Activated T-helper 2 cell treated with anti-CD3 and anti-CD28 coated beads, Interferon-gamma antibody, Interleukin-2, Interleukin-4, amounts not matched to agents 10 μg/mL and 5 μg/mL and 100 μg/mL, durations not matched to agents 14 hours and 24 hours and 36 hours (primary cell): ENCODE measurements at regions of chr7 and their contacts with region 1.

Region 1: DNA sequence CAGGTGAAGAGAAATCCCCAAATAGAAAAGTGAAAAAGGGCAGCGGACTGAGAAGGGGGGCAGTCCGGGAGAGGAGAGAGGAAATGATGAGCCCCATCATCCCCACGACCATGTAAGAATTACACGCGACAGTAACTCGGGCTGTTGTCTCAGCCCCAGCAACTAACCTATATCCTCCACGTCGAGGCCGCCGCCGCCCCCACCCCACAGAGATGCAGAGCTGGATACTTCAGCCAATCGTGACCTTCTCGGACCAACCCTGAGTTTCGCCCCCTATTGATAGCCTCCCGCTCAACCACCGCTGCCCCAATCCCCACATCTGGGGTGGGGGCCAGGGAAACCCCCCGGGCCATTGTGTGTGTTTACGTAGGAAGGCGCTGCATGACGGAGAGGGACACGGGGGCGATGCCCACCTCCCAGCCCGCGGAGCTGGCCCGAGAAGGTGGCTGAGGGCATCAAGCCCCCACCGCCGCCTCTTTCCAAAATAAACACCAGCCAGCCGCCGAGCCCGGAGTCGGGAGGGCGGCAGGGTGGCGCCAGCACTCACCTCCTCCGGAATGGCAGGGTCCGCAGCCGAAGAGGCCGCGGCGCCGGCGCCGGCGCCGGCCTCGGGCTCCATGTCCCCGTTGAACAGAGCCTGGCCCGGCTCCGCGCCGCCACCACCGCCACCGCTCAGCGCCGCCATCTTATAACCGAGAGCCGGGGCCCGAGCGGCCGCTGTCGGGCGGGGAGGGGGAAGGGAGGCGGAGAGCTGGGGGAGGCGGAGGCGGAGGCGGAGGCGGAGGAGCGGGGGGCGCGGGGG is 509 bp downstream of the BRAF start:
- DNase-seq: peak; percentile 62
- H3K4me3 Mint-ChIP-seq: no peak overlapping the region
- H3K27ac Mint-ChIP-seq: no peak overlapping the region
- H3K4me1 Mint-ChIP-seq: peaks cover 8% of the 10 kb centered on the region
- H3K27me3 Mint-ChIP-seq: peaks cover 2% of the 10 kb centered on the region

Region 2: DNA sequence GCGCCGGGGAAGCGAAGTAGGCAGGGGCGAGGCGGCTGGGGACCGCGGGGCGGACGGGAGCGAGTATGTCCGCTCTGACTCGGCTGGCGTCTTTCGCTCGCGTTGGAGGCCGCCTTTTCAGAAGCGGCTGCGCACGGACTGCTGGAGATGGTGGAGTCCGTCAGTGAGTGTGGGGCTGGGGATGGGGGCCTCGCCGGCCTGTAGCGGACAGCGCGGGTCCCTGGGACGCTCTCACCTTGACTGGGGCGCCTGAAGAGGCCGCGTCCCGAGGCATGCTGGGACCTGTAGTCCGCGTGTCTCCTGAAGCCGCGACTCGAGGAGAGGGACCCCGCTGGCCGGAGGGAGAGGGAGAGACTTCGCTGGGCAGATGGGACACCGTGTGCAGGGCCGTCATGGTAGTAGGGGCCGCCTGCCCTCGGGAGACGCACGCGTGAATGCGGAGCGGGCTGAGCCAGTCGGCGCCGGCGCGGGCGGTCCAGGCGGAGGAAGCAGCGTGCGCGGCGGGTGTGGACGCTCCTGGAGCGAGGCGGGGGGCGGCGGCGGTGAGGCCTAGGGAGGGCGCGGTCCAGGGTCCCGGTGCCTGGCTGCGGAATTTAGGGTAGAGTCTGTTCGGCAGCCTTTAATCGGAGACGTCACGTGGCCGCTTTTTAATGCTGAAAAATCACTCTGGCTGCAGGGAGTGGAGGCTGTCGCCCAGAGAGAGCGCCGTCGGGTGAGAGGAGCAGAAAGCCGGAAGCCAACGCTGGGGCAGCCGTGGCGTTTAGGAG is 227.4 kb before region 1 on chr7 and contains the start of gene NDUFB2:
- intact Hi-C with region 1: loop called (anchors 1 kb)
- DNase-seq: peak; percentile 86
- H3K4me3 Mint-ChIP-seq: peak within 1 kb of the TSS; percentile 99
- H3K27ac Mint-ChIP-seq: peak within 1 kb of the TSS; percentile 99
- H3K4me1 Mint-ChIP-seq: peaks cover 26% of the 10 kb centered on the region
- H3K27me3 Mint-ChIP-seq: no peaks in the 10 kb centered on the region
- total RNA-seq, gene NDUFB2: 172 and 178 TPM in 2 replicates

Region 3: GRCh38 chr7:140810830-140811556 is 113.2 kb before region 1 on chr7:
- intact Hi-C with region 1: loop called (anchors 2 kb)
- DNase-seq: peak; percentile 34
- H3K4me3 Mint-ChIP-seq: no peak overlapping the region
- H3K27ac Mint-ChIP-seq: no peak overlapping the region
- H3K4me1 Mint-ChIP-seq: peaks cover 1% of the 10 kb centered on the region
- H3K27me3 Mint-ChIP-seq: no peaks in the 10 kb centered on the region

Region 4: GRCh38 chr7:140876519-140877248 is 47.5 kb before region 1 on chr7:
- intact Hi-C with region 1: loop called (anchors 2 kb)
- DNase-seq: no peak
- H3K4me3 Mint-ChIP-seq: no peak overlapping the region
- H3K27ac Mint-ChIP-seq: no peak overlapping the region
- H3K4me1 Mint-ChIP-seq: peaks cover 45% of the 10 kb centered on the region
- H3K27me3 Mint-ChIP-seq: no peaks in the 10 kb centered on the region

Region 5: GRCh38 chr7:140902303-140902953 is 21.8 kb before region 1 on chr7:
- intact Hi-C with region 1: loop called (anchors 1 kb)
- DNase-seq: no peak
- H3K4me3 Mint-ChIP-seq: no peak overlapping the region
- H3K27ac Mint-ChIP-seq: peak overlapping the region; percentile 75
- H3K4me1 Mint-ChIP-seq: peaks cover 32% of the 10 kb centered on the region
- H3K27me3 Mint-ChIP-seq: no peaks in the 10 kb centered on the region

Region 6: DNA sequence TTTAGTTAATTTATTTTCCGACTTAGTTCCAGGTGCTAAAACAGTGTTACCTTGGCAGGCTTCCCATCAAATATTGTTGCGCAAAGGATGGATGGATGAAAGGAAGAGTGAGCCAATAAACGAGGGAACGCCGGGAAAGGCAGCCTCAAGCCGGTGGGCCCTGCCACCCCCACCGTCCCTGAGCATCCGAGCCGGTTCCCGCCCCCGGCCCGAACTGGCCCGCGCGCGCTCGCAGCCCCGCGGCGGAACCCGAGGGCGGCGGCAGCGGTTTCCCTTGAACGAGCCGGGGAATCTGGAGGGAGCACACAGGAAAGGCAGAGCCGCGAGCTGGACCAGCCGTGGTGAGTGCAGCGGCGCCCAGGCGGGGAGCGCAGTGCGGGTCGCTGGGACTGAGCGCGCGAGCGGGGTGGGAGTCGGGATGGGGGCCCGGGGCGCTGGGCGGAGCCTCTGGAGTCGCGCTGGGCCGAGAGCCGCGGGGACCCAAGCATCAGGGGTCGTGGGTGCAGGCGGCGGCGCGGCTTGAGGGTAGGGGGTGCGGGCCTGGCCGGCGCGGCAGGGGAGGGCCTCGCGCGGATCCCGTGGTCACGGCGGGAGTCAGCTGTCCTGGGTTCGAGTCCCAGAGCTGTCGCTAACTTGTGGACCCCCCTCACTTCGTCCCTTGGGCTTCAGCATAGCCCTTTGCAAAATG is 627.0 kb after region 1 on chr7 and contains the start of gene AGK:
- intact Hi-C with region 1: loop called (anchors 10 kb)
- DNase-seq: peak; percentile 75
- H3K4me3 Mint-ChIP-seq: peak within 1 kb of the TSS; percentile 92
- H3K27ac Mint-ChIP-seq: peak within 1 kb of the TSS; percentile 97
- H3K4me1 Mint-ChIP-seq: peaks cover 41% of the 10 kb centered on the region
- H3K27me3 Mint-ChIP-seq: no peaks in the 10 kb centered on the region
- total RNA-seq, gene AGK: 144 and 147 TPM in 2 replicates

Region 7: DNA sequence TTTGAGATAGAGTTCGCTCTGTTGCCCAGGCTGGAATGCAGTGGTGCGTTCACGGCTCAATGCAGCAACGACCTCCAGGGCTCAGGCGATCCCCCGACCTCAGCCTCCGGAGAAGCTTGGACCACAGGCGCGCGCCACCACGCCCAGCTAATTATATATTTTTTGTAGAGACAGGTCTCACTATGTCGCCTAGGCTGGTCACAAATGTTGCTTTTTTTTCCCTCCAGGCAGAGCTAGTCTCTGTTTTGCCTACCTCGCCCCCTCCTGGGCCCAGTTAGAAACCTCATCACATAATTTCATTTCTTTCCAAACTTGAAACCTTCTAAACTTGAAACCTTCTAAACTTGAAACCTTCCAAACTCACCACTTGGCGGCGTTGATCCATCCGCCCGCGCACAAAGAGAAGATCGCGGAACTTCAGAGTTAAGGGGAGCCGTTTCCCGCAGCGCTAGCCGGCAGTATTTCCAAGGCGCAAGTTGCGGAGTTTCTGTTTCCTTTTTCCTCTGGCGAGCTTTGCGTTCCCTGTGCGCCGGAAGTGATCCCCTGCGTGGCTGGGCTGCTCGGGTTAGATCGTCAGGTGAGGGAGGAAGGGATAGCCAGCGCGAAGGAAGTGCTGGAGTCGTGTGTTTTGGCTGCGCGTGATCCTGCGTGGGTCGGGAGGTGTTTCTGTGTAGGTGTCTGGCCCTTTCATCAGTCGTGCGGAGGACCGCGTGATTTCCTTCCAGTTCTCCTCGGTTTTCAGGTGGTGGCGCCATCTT is 813.8 kb after region 1 on chr7 and contains the start of gene SSBP1:
- intact Hi-C with region 1: loop called (anchors 1 kb)
- DNase-seq: peak; percentile 93
- H3K4me3 Mint-ChIP-seq: peak within 1 kb of the TSS; percentile 94
- H3K27ac Mint-ChIP-seq: peak within 1 kb of the TSS; percentile 93
- H3K4me1 Mint-ChIP-seq: peaks cover 23% of the 10 kb centered on the region
- H3K27me3 Mint-ChIP-seq: no peaks in the 10 kb centered on the region
- total RNA-seq, gene SSBP1: 244 and 245 TPM in 2 replicates